ENCODE measurements at regions of chr12 and their contacts with region 1.

Region 1: DNA sequence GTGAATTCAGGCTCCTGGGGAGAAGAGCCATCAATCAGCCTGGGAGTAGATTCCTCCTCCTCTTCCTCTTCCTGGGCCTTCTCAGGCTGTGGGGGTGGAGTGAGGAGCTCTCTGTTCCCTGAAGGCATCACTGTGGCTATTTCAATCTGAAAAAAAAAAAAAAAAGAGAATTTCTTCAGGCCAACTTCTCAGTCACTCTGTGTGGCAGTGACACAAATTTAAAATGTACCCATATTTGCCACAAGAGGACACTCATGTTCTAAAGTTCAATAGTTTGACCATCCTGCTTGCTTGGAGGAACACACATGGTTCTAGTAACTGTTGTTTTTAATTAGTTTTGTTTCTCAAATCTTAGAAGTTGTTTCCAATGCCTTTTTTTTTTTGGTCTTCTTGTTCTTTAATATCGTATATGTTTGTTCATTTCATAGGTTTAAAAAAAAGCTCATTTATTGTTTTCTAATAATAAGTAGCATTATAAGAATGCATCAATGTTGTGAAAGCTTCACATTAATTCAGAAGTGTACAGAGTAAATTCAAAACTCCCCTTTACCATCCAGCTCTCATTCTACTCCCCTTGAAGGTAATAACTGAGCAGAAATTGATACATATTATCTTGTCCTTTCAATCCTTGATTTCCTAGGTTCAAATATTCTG is 23.3 kb upstream of the CCER1 start:
- DNase-seq: no peak
- H3K4me3 ChIP-seq: no peak overlapping the region
- H3K27ac ChIP-seq: no peak overlapping the region
- H3K4me1 ChIP-seq: no peaks in the 10 kb centered on the region
- H3K27me3 ChIP-seq: no peaks in the 10 kb centered on the region
- CTCF ChIP-seq: peak; percentile 60 to 80

Region 2: DNA sequence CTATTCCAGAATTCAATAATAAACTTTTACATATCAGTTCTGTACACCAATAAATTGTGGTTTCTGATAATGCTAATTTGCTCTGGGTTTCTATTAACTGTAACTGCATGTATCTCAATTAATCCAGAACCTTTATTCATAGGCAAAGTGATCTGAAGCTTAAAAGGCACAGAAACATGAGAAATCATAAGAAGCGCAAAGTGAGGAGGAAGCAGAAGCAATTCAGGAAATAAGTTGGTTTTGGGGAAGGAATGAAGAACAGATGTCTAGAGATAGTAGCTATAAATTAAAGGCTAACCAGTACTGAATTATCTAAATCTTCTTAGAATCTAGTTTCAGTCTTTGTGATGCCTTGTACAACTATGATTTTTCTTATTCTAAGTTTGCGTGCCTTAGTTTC is 55.0 kb after region 1 on chr12:
- intact Hi-C with region 1: no loop called
- DNase-seq: no peak
- H3K4me3 ChIP-seq: no peak overlapping the region
- H3K27ac ChIP-seq: no peak overlapping the region
- H3K4me1 ChIP-seq: no peaks in the 10 kb centered on the region
- H3K27me3 ChIP-seq: no peaks in the 10 kb centered on the region
- CTCF ChIP-seq: no peak

Region 3: DNA sequence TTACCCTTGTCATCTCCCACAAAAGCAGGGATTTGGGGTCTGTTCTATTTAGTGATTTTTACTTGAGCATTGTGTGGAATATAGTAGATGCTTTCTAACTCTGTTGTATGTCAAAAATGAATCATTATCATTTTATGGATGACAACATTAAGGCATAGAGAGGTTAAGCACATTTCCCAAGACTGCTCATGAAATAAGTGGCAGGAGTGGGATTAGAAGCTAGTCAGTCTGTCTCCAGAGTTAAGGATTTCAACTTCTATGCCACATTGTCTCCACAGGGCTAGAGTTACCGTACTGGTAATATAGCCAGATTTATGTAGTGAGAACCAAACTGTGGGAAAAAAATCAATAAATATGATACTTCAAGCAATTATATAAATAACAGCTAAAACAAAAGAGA is 375.0 kb after region 1 on chr12:
- intact Hi-C with region 1: loop called (anchors 5 kb)
- DNase-seq: no peak
- H3K4me3 ChIP-seq: no peak overlapping the region
- H3K27ac ChIP-seq: no peak overlapping the region
- H3K4me1 ChIP-seq: no peaks in the 10 kb centered on the region
- H3K27me3 ChIP-seq: no peaks in the 10 kb centered on the region
- CTCF ChIP-seq: no peak

Measured in tibial artery (tissue), 4 donors.